Activated CD4-positive, alpha-beta memory T cell treated with anti-CD3 and anti-CD28 coated beads for 36 hours (primary cell): ENCODE measurements at regions of chr12 and their contacts with region 1.

Region 1: DNA sequence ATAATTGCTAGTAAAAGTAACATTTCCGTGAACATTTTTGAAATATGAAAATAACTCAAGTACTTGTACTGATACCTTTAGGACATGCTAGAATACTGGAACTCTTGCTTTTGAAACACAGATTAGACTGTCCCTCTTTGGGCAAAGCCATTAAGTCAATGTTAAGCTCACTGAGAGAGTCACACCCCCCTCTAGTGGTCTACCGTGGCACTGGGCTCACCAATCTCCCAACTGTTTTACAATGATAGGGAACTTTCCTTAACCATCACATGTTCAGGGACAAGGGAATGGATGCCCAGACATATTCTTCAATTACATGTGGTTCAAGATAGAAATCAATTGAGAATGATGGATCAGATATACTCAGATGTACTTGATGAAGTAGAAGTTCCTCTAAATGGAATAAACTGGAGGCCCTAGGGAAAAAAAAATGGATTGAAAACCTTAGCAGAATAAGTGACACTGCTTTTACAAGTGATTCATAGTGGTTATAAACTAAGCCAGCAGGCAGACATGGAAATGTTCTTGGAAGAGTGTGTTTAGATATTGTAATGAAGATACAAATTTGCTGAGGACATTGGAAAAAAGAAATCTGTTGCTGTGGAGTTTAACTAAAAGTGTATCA is 17.8 kb downstream of the NANOG start:
- DNase-seq: peak; percentile 73
- H3K4me3 Mint-ChIP-seq: no peak overlapping the region
- H3K27ac Mint-ChIP-seq: no peak overlapping the region
- H3K4me1 Mint-ChIP-seq: no peaks in the 10 kb centered on the region
- H3K27me3 Mint-ChIP-seq: peaks cover 3% of the 10 kb centered on the region

Region 2: DNA sequence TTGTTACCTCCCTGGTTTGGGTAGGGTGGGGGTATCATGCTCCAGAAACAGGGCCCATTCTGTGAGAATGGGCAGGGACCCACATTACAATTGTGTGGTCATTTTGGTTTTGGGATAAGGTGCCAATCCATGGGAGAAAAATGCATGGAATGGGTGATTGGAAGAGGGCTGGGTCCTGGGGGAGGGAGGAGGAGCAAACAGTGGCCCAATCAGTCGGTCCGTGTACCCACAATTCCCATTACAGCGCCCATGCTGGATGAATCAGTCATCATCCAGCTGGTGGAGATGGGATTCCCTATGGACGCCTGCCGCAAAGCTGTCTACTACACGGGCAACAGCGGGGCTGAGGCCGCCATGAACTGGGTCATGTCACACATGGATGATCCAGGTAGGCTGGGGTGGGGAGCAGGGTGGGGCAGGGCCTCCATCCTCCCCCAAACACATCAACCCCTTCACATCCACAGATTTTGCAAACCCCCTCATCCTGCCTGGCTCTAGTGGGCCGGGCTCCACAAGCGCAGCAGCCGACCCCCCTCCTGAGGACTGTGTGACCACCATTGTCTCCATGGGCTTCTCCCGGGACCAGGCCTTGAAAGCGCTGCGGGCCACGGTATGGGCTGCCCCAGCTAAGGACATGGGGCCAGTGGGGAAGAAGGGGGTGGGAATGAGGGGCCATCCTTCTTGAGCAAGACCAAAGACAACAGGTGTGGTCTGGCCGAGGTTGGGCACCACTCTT is 943.2 kb before region 1 on chr12:
- CTCF ChIA-PET with region 1: no interaction called
- POLR2A ChIA-PET with region 1: no interaction called
- intact Hi-C with region 1: no loop called
- DNase-seq: no peak
- H3K4me3 Mint-ChIP-seq: no peak overlapping the region
- H3K27ac Mint-ChIP-seq: no peak overlapping the region
- H3K4me1 Mint-ChIP-seq: peaks cover 16% of the 10 kb centered on the region
- H3K27me3 Mint-ChIP-seq: no peaks in the 10 kb centered on the region

Region 3: DNA sequence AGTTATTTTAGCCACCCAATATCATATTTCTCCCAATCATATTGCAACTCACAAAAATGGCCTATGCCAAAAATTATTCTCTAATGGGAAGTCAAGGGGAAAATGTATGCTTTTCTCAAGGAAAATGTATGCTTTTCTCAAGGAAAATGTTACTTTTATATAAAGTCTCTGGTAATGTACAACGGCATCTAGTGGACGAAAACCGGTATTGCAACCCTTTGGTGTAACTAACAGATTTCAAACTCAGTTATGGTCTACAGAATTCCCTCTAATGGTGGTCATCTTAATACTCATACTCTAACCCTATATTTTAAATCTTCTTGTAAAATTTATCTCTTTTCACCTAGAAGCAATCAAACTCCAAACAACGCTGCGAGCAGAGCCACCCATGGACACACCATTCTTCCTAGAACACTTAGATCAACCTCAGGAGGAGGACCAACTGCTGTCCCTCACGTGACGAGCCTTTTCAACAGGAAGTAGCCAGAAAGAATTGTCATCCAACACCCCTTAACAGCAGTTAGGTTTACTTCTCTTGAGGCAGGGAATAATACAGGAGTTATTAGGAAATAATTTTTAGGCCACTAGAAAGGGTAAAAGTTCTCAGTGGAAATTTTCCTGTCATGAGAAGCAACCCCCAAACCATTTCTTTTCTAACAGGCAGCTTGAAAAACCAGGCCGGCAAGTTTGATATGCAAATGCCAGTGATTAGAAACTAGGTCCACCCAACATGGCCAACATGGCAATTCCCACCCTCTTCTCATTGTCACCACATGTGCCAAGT is 161.4 kb before region 1 on chr12:
- CTCF ChIA-PET with region 1: interaction called, 69 read pairs
- POLR2A ChIA-PET with region 1: no interaction called
- intact Hi-C with region 1: loop called (anchors 10 kb)
- DNase-seq: peak; percentile 18
- H3K4me3 Mint-ChIP-seq: no peak overlapping the region
- H3K27ac Mint-ChIP-seq: no peak overlapping the region
- H3K4me1 Mint-ChIP-seq: peaks cover 11% of the 10 kb centered on the region
- H3K27me3 Mint-ChIP-seq: no peaks in the 10 kb centered on the region

Region 4: DNA sequence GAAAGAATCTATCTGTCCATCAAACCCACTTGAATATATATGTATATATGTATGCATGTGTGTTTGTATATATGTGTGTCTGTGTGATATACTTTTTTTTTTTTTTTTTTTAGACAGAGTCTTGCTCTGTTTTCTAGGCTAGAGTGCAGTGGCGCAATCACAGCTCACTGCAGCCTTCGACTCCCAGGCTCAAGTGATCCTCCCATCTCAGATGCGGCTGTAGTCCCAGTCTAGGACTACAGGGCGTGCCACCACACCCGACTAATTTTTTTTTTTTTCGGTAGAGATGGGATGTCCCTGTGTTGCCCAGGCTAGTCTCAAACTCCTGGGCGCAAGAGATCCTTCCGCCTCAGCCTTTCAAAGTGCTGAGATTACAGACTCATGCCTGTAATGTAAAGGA is 128.2 kb before region 1 on chr12:
- CTCF ChIA-PET with region 1: interaction called, 90 read pairs
- POLR2A ChIA-PET with region 1: no interaction called
- intact Hi-C with region 1: loop called (anchors 1 kb)
- DNase-seq: no peak
- H3K4me3 Mint-ChIP-seq: no peak overlapping the region
- H3K27ac Mint-ChIP-seq: no peak overlapping the region
- H3K4me1 Mint-ChIP-seq: peaks cover 9% of the 10 kb centered on the region
- H3K27me3 Mint-ChIP-seq: peaks cover 4% of the 10 kb centered on the region

Region 5: GRCh38 chr12:7844116-7844515 is 37.1 kb after region 1 on chr12:
- CTCF ChIA-PET with region 1: no interaction called
- POLR2A ChIA-PET with region 1: no interaction called
- intact Hi-C with region 1: no loop called
- DNase-seq: no peak
- H3K4me3 Mint-ChIP-seq: no peak overlapping the region
- H3K27ac Mint-ChIP-seq: no peak overlapping the region
- H3K4me1 Mint-ChIP-seq: peaks cover 3% of the 10 kb centered on the region
- H3K27me3 Mint-ChIP-seq: peaks cover 9% of the 10 kb centered on the region